Colonic mucosa (tissue), 4 donors: ENCODE measurements at regions of chr9 and their contacts with region 1.

Region 1: GRCh38 chr9:105414947-105415661 is 32.7 kb upstream of the FSD1L start:
- DNase-seq: peak; percentile 72
- H3K4me3 ChIP-seq: no peak overlapping the region
- H3K27ac ChIP-seq: no peak overlapping the region
- H3K4me1 ChIP-seq: no peaks in the 10 kb centered on the region
- H3K27me3 ChIP-seq: no peaks in the 10 kb centered on the region
- CTCF ChIP-seq: peak; percentile 80

Region 2: GRCh38 chr9:104863180-104863883 is 551.8 kb before region 1 on chr9:
- intact Hi-C with region 1: loop called (anchors 5 kb)
- DNase-seq: peak; percentile 47
- H3K4me3 ChIP-seq: no peak overlapping the region
- H3K27ac ChIP-seq: peak overlapping the region; percentile 28
- H3K4me1 ChIP-seq: no peaks in the 10 kb centered on the region
- H3K27me3 ChIP-seq: no peaks in the 10 kb centered on the region
- CTCF ChIP-seq: peak; percentile 73

Region 3: GRCh38 chr9:105157130-105157583 is 257.9 kb before region 1 on chr9:
- intact Hi-C with region 1: loop called (anchors 5 kb)
- DNase-seq: peak; percentile 42
- H3K4me3 ChIP-seq: no peak overlapping the region
- H3K27ac ChIP-seq: no peak overlapping the region
- H3K4me1 ChIP-seq: no peaks in the 10 kb centered on the region
- H3K27me3 ChIP-seq: no peaks in the 10 kb centered on the region
- CTCF ChIP-seq: peak; percentile 37

Region 4: DNA sequence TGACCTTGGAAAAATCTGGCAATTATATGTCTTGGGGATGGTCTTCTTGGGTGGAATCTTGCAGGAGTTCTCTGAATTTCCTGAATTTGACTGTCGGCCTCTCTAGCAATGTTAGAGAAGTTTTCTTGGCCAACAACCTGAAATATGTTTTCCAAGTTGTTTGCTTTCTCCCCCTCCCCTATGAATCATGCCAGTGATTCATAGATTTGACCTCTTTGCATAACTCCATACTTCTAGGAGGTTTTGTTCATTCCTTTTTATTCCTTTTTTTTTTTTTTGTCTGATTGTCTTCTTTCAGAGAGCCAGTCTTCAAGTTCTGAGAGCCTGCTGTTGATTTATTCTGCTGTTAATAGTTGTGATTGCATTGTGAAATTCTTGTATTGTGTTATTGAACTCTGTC is 227.3 kb before region 1 on chr9:
- intact Hi-C with region 1: loop called (anchors 10 kb)
- DNase-seq: no peak
- H3K4me3 ChIP-seq: no peak overlapping the region
- H3K27ac ChIP-seq: no peak overlapping the region
- H3K4me1 ChIP-seq: no peaks in the 10 kb centered on the region
- H3K27me3 ChIP-seq: no peaks in the 10 kb centered on the region
- CTCF ChIP-seq: no peak